Activated CD4-positive, alpha-beta memory T cell treated with anti-CD3 and anti-CD28 coated beads, Interleukin-2, amount 10 ng/mL, durations not matched to agents 7 days and 5 days (primary cell): ENCODE measurements at regions of chr9 and their contacts with region 1.

Region 1: GRCh38 chr9:37784616-37785483 is at the start of gene EXOSC3:
- DNase-seq: peak; percentile 90
- H3K4me3 Mint-ChIP-seq: peak within 1 kb of the TSS; percentile 98
- H3K27ac Mint-ChIP-seq: peak within 1 kb of the TSS; percentile 95
- H3K4me1 Mint-ChIP-seq: peaks cover 47% of the 10 kb centered on the region
- H3K27me3 Mint-ChIP-seq: no peaks in the 10 kb centered on the region
- total RNA-seq, gene EXOSC3: 66.6 to 69.6 TPM

Region 2: GRCh38 chr9:37592108-37592951 is 192.5 kb before region 1 on chr9 and contains the start of gene TOMM5:
- CTCF ChIA-PET with region 1: interaction called, 3 read pairs
- POLR2A ChIA-PET with region 1: interaction called, 16 read pairs
- DNase-seq: peak; percentile 94
- H3K4me3 Mint-ChIP-seq: peak within 1 kb of the TSS; percentile 97
- H3K27ac Mint-ChIP-seq: peak within 1 kb of the TSS; percentile 95
- H3K4me1 Mint-ChIP-seq: peaks cover 33% of the 10 kb centered on the region
- H3K27me3 Mint-ChIP-seq: peaks cover 17% of the 10 kb centered on the region
- total RNA-seq, gene TOMM5: 81.0 to 86.4 TPM

Region 3: GRCh38 chr9:37753489-37754190 is 31.2 kb before region 1 on chr9 and contains the start of gene TRMT10B:
- CTCF ChIA-PET with region 1: interaction called, 3 read pairs
- POLR2A ChIA-PET with region 1: interaction called, 15 read pairs
- DNase-seq: peak; percentile 76
- H3K4me3 Mint-ChIP-seq: peak within 1 kb of the TSS; percentile 95
- H3K27ac Mint-ChIP-seq: peak within 1 kb of the TSS; percentile 79
- H3K4me1 Mint-ChIP-seq: peaks cover 26% of the 10 kb centered on the region
- H3K27me3 Mint-ChIP-seq: no peaks in the 10 kb centered on the region
- total RNA-seq, gene TRMT10B: 11.8 to 14.2 TPM

Region 4: DNA sequence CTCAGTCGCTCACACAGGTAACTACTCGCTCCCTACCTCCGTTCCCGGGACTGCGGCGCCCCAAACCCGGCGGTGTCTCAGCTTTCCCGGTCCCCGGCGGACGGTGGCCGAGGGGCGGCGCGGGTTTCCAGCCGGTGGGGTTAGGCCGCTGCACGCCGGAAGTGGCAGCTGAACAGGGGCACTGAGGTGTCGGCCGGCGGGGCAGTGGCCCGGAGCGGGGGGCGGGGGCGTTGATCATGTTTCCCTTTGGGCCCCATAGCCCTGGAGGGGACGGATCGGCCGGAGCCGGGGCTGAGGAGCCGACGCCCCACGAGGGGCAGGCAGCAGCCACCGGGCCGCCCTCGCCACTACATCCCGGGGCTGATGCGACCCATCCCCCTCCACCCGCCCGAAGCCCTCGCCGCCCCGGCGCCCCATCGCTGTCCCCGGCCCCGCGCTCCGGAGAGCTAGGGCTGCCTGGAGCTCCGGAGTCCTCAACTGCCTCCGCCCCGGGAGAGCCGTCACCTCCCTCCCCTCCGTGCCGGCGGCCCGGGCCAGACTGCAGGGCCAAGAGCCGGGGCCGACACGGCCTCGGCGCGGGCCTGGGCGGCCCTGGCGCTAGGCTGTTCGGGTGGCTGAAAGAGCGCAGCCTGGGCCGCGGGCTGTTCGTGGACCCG is 15.9 kb after region 1 on chr9 and contains the start of gene DCAF10:
- CTCF ChIA-PET with region 1: interaction called, 6 read pairs
- POLR2A ChIA-PET with region 1: interaction called, 118 read pairs
- DNase-seq: peak; percentile 89
- H3K4me3 Mint-ChIP-seq: peak within 1 kb of the TSS; percentile 89
- H3K27ac Mint-ChIP-seq: peak within 1 kb of the TSS; percentile 83
- H3K4me1 Mint-ChIP-seq: peaks cover 40% of the 10 kb centered on the region
- H3K27me3 Mint-ChIP-seq: peaks cover 2% of the 10 kb centered on the region
- total RNA-seq, gene DCAF10: 18.7 to 20.7 TPM